ENCODE measurements at regions of chr7 and their contacts with region 1.

Region 1: GRCh38 chr7:106485031-106485551 is 175.9 kb downstream of the CCDC71L start:
- DNase-seq: no peak
- H3K4me3 Mint-ChIP-seq: peak overlapping the region; percentile 19
- H3K27ac Mint-ChIP-seq: peak overlapping the region; percentile 81
- H3K4me1 Mint-ChIP-seq: peaks cover 41% of the 10 kb centered on the region
- H3K27me3 Mint-ChIP-seq: no peaks in the 10 kb centered on the region

Region 2: GRCh38 chr7:105906695-105907094 is 578.4 kb before region 1 on chr7:
- intact Hi-C with region 1: no loop called
- DNase-seq: no peak
- H3K4me3 Mint-ChIP-seq: no peak overlapping the region
- H3K27ac Mint-ChIP-seq: no peak overlapping the region
- H3K4me1 Mint-ChIP-seq: no peaks in the 10 kb centered on the region
- H3K27me3 Mint-ChIP-seq: peaks cover 6% of the 10 kb centered on the region

Region 3: DNA sequence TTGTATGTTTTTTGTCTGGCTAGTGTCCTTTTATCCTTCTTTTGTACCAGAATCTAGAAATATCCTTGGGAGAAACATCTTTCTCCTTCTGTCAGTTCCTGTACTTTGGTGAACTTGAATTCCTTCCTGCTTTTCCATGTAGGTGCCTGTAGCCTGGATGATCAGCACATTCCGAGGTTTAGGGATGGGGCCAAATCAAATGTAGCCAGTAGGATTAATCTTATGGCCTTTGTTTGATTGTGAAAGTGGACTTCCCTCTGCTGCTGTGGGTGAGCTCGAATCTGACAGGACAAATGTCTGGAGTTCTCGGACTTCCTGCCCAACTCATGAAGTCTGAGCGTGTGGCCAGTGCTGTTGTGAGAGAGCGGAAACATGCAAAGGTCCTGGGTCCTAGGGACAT is 167.1 kb before region 1 on chr7:
- intact Hi-C with region 1: no loop called
- DNase-seq: no peak
- H3K4me3 Mint-ChIP-seq: no peak overlapping the region
- H3K27ac Mint-ChIP-seq: no peak overlapping the region
- H3K4me1 Mint-ChIP-seq: peaks cover 15% of the 10 kb centered on the region
- H3K27me3 Mint-ChIP-seq: peaks cover 8% of the 10 kb centered on the region

Region 4: DNA sequence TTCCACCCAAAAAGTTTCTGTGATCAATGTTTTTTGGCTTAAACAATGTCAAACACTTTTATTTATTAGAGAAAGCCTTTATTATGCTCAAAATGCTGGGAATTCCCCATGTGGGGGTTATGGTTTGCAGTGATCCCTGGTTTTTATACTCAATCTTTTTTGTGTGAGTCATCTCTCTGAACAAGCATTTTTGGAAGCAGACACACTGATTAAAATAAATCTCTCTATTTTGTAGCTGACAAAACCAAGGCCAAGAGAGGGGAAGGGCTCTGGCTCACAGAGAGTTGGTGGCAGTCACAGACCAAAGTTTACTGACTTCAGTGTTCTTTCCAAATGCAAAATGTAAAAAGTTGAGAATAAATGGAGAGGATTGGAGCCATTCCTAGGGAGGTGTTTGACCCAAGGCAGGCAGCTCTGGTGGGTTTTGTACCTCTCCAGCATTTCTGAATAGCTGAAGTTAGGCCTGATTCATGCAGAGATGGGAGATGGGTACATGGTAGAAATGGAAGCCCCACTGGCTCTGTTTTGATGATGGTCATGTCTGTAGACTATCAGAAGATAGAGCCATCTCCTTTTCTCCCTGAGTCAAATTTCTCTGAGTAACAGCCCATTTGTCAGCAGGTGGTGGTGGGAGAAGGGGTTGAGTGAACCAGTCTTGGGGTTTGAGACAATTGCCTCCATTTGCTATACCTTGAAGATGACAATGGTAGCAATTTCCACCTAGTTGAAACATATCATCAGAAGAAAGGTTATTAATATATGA is 154.9 kb before region 1 on chr7:
- intact Hi-C with region 1: no loop called
- DNase-seq: no peak
- H3K4me3 Mint-ChIP-seq: peak overlapping the region; percentile 29
- H3K27ac Mint-ChIP-seq: peak overlapping the region; percentile 14
- H3K4me1 Mint-ChIP-seq: peaks cover 19% of the 10 kb centered on the region
- H3K27me3 Mint-ChIP-seq: peaks cover 2% of the 10 kb centered on the region

Region 5: GRCh38 chr7:106461993-106462859 is 22.9 kb before region 1 on chr7:
- intact Hi-C with region 1: loop called (anchors 2 kb)
- DNase-seq: no peak
- H3K4me3 Mint-ChIP-seq: no peak overlapping the region
- H3K27ac Mint-ChIP-seq: no peak overlapping the region
- H3K4me1 Mint-ChIP-seq: peaks cover 30% of the 10 kb centered on the region
- H3K27me3 Mint-ChIP-seq: no peaks in the 10 kb centered on the region

Region 6: GRCh38 chr7:106659963-106660861 is 175.1 kb after region 1 on chr7:
- intact Hi-C with region 1: no loop called
- DNase-seq: peak; percentile 73
- H3K4me3 Mint-ChIP-seq: peak overlapping the region; percentile 94
- H3K27ac Mint-ChIP-seq: peak overlapping the region; percentile 92
- H3K4me1 Mint-ChIP-seq: peaks cover 32% of the 10 kb centered on the region
- H3K27me3 Mint-ChIP-seq: peaks cover 3% of the 10 kb centered on the region

Region 7: DNA sequence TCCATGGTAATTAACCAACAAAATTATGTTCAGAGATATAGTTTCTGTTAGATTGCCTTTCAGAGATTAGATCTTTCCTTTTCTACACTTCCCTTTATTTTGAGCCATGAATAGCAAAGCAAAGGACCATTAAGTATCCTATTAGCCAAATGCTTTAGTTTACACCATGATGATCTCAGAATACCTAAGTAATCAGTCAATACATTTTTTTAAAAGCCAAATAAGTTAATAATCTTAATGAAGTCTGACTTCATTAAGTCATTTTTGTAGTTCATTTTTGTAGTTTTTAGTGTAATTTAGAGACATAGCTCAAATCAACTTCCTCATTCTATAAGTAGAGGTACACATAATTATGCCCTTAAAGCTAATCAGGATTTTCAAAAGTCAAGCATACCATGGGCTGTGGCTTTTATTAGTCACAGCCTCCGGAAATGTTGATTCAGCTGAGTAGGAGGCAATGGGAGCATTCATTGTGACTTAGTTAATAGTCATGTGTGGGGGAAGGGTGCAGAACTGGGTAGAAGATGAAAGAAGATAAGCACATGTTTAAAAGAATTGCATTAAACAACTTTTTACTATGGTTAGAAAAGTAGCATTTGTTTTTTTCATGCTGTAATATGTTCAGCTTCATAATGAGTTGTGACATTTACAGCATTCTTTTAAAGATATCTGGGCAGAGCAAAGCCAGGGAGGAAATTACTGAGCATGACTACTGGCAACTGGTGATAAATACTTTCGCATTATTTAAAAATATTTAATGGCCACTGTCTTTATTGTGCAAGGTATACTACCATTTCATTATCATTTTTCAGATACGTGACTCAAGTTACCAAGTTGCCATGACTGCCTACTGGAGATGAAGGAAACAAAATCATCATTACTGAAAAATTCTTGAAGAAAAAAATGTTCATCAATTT is 233.1 kb after region 1 on chr7:
- intact Hi-C with region 1: loop called (anchors 1 kb)
- DNase-seq: peak; percentile 37
- H3K4me3 Mint-ChIP-seq: no peak overlapping the region
- H3K27ac Mint-ChIP-seq: no peak overlapping the region
- H3K4me1 Mint-ChIP-seq: peaks cover 11% of the 10 kb centered on the region
- H3K27me3 Mint-ChIP-seq: no peaks in the 10 kb centered on the region

Region 8: GRCh38 chr7:106772655-106773108 is 287.6 kb after region 1 on chr7:
- intact Hi-C with region 1: loop called (anchors 1 kb)
- DNase-seq: no peak
- H3K4me3 Mint-ChIP-seq: peak overlapping the region; percentile 47
- H3K27ac Mint-ChIP-seq: peak overlapping the region; percentile 98
- H3K4me1 Mint-ChIP-seq: peaks cover 63% of the 10 kb centered on the region
- H3K27me3 Mint-ChIP-seq: no peaks in the 10 kb centered on the region